Body of pancreas (tissue), 4 donors: ENCODE measurements at regions of chr1 and their contacts with region 1.

Region 1: GRCh38 chr1:53395726-53396125 is 63.5 kb upstream of the DMRTB1 start:
- DNase-seq: no peak
- ATAC-seq: no peak
- H3K4me3 ChIP-seq: no peak overlapping the region
- H3K27ac ChIP-seq: no peak overlapping the region
- H3K4me1 ChIP-seq: no peaks in the 10 kb centered on the region
- H3K27me3 ChIP-seq: no peaks in the 10 kb centered on the region
- CTCF ChIP-seq: no peak
- POLR2A ChIP-seq: no peak

Region 2: GRCh38 chr1:53277731-53278130 is 118.0 kb before region 1 on chr1:
- intact Hi-C with region 1: loop called (anchors 2 kb)
- DNase-seq: no peak
- ATAC-seq: no peak
- H3K4me3 ChIP-seq: no peak overlapping the region
- H3K27ac ChIP-seq: no peak overlapping the region
- H3K4me1 ChIP-seq: no peaks in the 10 kb centered on the region
- H3K27me3 ChIP-seq: no peaks in the 10 kb centered on the region
- CTCF ChIP-seq: no peak
- POLR2A ChIP-seq: no peak

Region 3: DNA sequence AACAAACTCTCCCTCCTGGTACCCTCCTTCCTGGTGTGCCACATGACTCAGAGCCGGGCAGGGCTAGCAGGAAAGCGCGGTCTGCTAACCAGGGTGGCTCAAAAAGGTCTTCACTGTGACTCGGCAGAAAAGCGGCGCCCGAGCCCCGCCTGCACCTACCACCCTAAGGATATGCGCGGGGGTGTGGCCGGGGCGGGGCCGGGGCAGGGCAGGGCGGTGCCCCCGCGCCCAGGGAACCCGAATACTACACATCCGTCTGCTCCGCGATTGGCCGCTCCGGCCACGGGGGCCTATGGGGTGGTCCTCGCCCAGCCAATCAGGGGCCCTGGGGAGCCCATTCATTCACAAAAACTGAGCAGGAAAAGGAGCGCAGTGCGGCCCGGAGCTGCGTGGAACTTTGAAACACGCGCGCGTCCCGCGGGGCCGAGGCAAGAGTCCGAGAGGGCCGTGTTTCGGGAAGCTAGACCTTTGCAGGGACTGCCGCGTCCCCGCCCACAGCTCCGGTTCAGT is 69.6 kb before region 1 on chr1:
- intact Hi-C with region 1: no loop called
- DNase-seq: peak; percentile 79 to 94 (median 88)
- ATAC-seq: peak; percentile 82
- H3K4me3 ChIP-seq: peak overlapping the region; percentile 4 to 74
- H3K27ac ChIP-seq: peak overlapping the region in 2 of 4 donors; percentile 9 to 81
- H3K4me1 ChIP-seq: peaks cover 26% of the 10 kb centered on the region
- H3K27me3 ChIP-seq: no peaks in the 10 kb centered on the region
- CTCF ChIP-seq: no peak
- POLR2A ChIP-seq: no peak